Mammary epithelial cell (primary cell): ENCODE measurements at regions of chr10 and their contacts with region 1.

Region 1: GRCh38 chr10:96374985-96375830 is 16.4 kb upstream of the OPALIN start:
- DNase-seq: peak; percentile 87
- H3K4me3 ChIP-seq: peak overlapping the region; percentile 36 to 48 (median 45)
- H3K27ac ChIP-seq: no peak overlapping the region
- H3K4me1 ChIP-seq: peaks cover 3% of the 10 kb centered on the region
- H3K27me3 ChIP-seq: no peaks in the 10 kb centered on the region
- CTCF ChIP-seq: peak; percentile 97 to 99

Region 2: DNA sequence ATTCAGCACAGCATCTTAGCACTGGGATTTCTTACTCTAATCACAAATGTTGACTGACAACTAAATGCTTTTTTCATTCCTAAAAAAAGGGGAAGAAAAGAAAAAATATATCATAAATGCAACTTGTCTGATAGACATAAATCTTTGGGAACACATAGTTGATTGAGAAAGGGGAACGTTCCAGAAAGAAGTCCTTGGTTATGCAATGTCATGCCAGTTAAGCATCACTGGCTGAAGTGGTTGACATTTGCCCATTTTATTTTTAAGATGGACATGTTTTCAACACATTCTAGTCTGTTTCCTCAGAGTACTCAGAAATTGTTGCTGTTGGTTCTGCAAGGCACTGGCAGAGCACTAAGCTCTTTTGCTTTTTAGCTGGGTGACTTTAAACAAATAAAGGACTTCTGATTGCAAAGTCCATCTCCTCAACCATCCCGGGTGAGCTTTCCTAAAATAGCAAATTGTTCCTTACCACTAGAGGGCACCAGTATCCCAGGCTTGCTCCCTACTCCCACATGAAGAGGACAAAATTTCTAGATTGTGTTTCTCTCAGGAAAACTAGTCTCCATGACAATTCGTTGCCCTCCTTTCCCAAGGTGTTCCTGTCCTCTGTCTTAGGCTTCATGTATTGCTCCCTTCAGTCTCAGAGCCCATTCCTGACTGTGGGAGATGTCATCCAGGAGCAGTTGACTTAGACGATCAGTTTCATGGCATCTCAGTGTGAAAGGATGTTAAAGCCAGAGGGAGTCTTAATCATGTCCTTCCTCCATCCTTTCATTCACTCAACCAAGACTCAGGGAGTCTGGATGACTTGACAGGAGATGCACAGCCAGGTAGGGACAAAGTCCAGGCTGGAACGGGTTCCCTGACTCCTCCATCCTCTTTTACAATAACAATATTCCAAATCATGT is 40.3 kb before region 1 on chr10:
- CTCF ChIA-PET with region 1: no interaction called
- dilution Hi-C with region 1: no loop called
- in situ Hi-C with region 1: no loop called
- intact Hi-C with region 1: no loop called
- DNase-seq: peak; percentile 9
- H3K4me3 ChIP-seq: no peak overlapping the region
- H3K27ac ChIP-seq: no peak overlapping the region
- H3K4me1 ChIP-seq: no peaks in the 10 kb centered on the region
- H3K27me3 ChIP-seq: no peaks in the 10 kb centered on the region
- CTCF ChIP-seq: peak; percentile 78 to 85

Region 3: GRCh38 chr10:96395931-96396877 is 21.0 kb after region 1 on chr10:
- CTCF ChIA-PET with region 1: no interaction called
- dilution Hi-C with region 1: no loop called
- in situ Hi-C with region 1: no loop called
- intact Hi-C with region 1: loop called (anchors 2 kb)
- DNase-seq: peak; percentile 43
- H3K4me3 ChIP-seq: no peak overlapping the region
- H3K27ac ChIP-seq: no peak overlapping the region
- H3K4me1 ChIP-seq: no peaks in the 10 kb centered on the region
- H3K27me3 ChIP-seq: peaks cover 7% of the 10 kb centered on the region
- CTCF ChIP-seq: peak; percentile 72 to 87

Region 4: GRCh38 chr10:96470116-96470743 is 95.0 kb after region 1 on chr10:
- CTCF ChIA-PET with region 1: no interaction called
- dilution Hi-C with region 1: no loop called
- in situ Hi-C with region 1: no loop called
- intact Hi-C with region 1: no loop called
- DNase-seq: peak; percentile 19
- H3K4me3 ChIP-seq: no peak overlapping the region
- H3K27ac ChIP-seq: no peak overlapping the region
- H3K4me1 ChIP-seq: no peaks in the 10 kb centered on the region
- H3K27me3 ChIP-seq: peaks cover 1% of the 10 kb centered on the region
- CTCF ChIP-seq: peak; percentile 71 to 82

Region 5: GRCh38 chr10:96513698-96514561 is 138.7 kb after region 1 on chr10 and contains the start of gene TLL2:
- CTCF ChIA-PET with region 1: interaction called, 3 read pairs
- dilution Hi-C with region 1: no loop called
- in situ Hi-C with region 1: no loop called
- intact Hi-C with region 1: loop called (anchors 1 kb)
- DNase-seq: peak; percentile 91
- H3K4me3 ChIP-seq: peak within 1 kb of the TSS; percentile 35 to 65 (median 54)
- H3K27ac ChIP-seq: no peak within 1 kb of the TSS
- H3K4me1 ChIP-seq: peaks cover 28% of the 10 kb centered on the region
- H3K27me3 ChIP-seq: no peaks in the 10 kb centered on the region
- CTCF ChIP-seq: peak; percentile 15 to 74
- total RNA-seq, gene TLL2: 0.17 to 0.59 TPM

Region 6: DNA sequence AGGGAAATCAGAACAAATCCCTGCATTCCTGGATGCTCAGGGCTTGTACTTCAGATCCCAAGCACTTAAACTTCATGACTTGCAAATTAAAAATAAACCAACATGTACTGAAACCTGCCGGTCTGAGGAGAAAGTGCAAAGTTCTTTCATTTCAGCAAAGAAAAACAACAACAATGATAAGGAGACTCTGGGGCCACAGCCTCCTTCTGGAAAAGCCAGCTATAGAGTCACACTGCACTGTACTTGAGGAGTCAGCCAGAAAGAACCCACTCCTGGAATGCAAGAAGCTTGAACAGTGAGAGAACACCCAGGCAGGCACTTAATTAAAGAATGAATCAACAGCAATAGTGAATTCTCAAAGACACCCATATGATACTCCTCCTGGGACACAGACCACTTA is 261.3 kb after region 1 on chr10:
- CTCF ChIA-PET with region 1: no interaction called
- dilution Hi-C with region 1: no loop called
- in situ Hi-C with region 1: no loop called
- intact Hi-C with region 1: loop called (anchors 5 kb)
- DNase-seq: no peak
- H3K4me3 ChIP-seq: no peak overlapping the region
- H3K27ac ChIP-seq: no peak overlapping the region
- H3K4me1 ChIP-seq: no peaks in the 10 kb centered on the region
- H3K27me3 ChIP-seq: no peaks in the 10 kb centered on the region
- CTCF ChIP-seq: no peak

Region 7: GRCh38 chr10:97210543-97210961 is 835.3 kb after region 1 on chr10:
- CTCF ChIA-PET with region 1: no interaction called
- dilution Hi-C with region 1: no loop called
- in situ Hi-C with region 1: no loop called
- intact Hi-C with region 1: loop called (anchors 10 kb)
- DNase-seq: peak; percentile 40
- H3K4me3 ChIP-seq: no peak overlapping the region
- H3K27ac ChIP-seq: no peak overlapping the region
- H3K4me1 ChIP-seq: no peaks in the 10 kb centered on the region
- H3K27me3 ChIP-seq: no peaks in the 10 kb centered on the region
- CTCF ChIP-seq: peak; percentile 94 to 97